Mammary epithelial cell (primary cell): ENCODE measurements at regions of chr11 and their contacts with region 1.

Region 1: GRCh38 chr11:32052218-32052617 is 38.7 kb upstream of the RCN1 start:
- DNase-seq: peak; percentile 25
- H3K4me3 ChIP-seq: no peak overlapping the region
- H3K27ac ChIP-seq: no peak overlapping the region
- H3K4me1 ChIP-seq: peaks cover 11% of the 10 kb centered on the region
- H3K27me3 ChIP-seq: no peaks in the 10 kb centered on the region
- CTCF ChIP-seq: peak; percentile 61 to 74

Region 2: GRCh38 chr11:31702966-31703365 is 349.3 kb before region 1 on chr11:
- CTCF ChIA-PET with region 1: no interaction called
- dilution Hi-C with region 1: no loop called
- in situ Hi-C with region 1: no loop called
- intact Hi-C with region 1: no loop called
- DNase-seq: no peak
- H3K4me3 ChIP-seq: no peak overlapping the region
- H3K27ac ChIP-seq: no peak overlapping the region
- H3K4me1 ChIP-seq: no peaks in the 10 kb centered on the region
- H3K27me3 ChIP-seq: no peaks in the 10 kb centered on the region
- CTCF ChIP-seq: no peak

Region 3: GRCh38 chr11:31958076-31958735 is 94.0 kb before region 1 on chr11:
- CTCF ChIA-PET with region 1: no interaction called
- dilution Hi-C with region 1: no loop called
- in situ Hi-C with region 1: no loop called
- intact Hi-C with region 1: no loop called
- DNase-seq: peak; percentile 37
- H3K4me3 ChIP-seq: no peak overlapping the region
- H3K27ac ChIP-seq: no peak overlapping the region
- H3K4me1 ChIP-seq: peaks cover 6% of the 10 kb centered on the region
- H3K27me3 ChIP-seq: no peaks in the 10 kb centered on the region
- CTCF ChIP-seq: peak; percentile 64 to 79

Region 4: GRCh38 chr11:32094931-32095330 is 42.7 kb after region 1 on chr11:
- CTCF ChIA-PET with region 1: no interaction called
- dilution Hi-C with region 1: no loop called
- in situ Hi-C with region 1: no loop called
- intact Hi-C with region 1: loop called (anchors 5 kb)
- DNase-seq: no peak
- H3K4me3 ChIP-seq: no peak overlapping the region
- H3K27ac ChIP-seq: no peak overlapping the region
- H3K4me1 ChIP-seq: peaks cover 5% of the 10 kb centered on the region
- H3K27me3 ChIP-seq: no peaks in the 10 kb centered on the region
- CTCF ChIP-seq: no peak

Region 5: GRCh38 chr11:32154275-32154674 is 102.1 kb after region 1 on chr11:
- CTCF ChIA-PET with region 1: interaction called, 3 read pairs
- dilution Hi-C with region 1: no loop called
- in situ Hi-C with region 1: no loop called
- intact Hi-C with region 1: loop called (anchors 1 kb)
- DNase-seq: peak; percentile 24
- H3K4me3 ChIP-seq: no peak overlapping the region
- H3K27ac ChIP-seq: no peak overlapping the region
- H3K4me1 ChIP-seq: no peaks in the 10 kb centered on the region
- H3K27me3 ChIP-seq: peaks cover 5% of the 10 kb centered on the region
- CTCF ChIP-seq: peak; percentile 15 to 48